ENCODE measurements at regions of chr7 and their contacts with region 1.

Region 1: GRCh38 chr7:101470668-101471487 is 108.2 kb downstream of the COL26A1 start:
- DNase-seq: no peak
- ATAC-seq: no peak
- H3K4me3 ChIP-seq: no peak overlapping the region
- H3K27ac ChIP-seq: no peak overlapping the region
- H3K4me1 ChIP-seq: no peaks in the 10 kb centered on the region
- H3K27me3 ChIP-seq: peaks cover 0 to 11% (median 0%) of the 10 kb centered on the region in 9 donors
- CTCF ChIP-seq: no peak
- POLR2A ChIP-seq: no peak

Region 2: DNA sequence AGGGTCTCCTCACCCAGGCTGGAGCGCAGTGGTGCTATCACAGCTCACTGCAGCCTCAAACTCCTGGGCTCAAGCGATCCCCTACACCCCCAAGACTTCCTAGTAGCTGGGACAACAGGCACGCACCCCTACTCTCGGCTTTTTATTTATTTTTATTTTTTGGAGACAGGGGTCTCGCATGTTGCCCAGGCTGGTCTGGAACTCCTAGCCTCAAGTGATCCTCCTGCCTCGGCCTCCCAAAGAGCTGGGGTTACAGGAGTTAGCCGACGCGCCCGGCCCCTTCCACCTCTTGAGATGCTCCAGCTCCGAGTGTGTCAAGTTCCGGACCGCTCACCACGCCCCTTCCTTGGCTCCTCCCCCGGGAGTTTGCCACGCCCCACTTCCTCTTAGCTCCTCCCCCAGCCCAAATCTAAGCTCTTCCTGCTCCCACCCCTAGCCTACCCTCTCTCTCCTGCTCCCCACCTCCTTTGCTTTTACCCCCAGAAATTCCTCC is 297.1 kb before region 1 on chr7:
- intact Hi-C with region 1: no loop called
- DNase-seq: no peak
- ATAC-seq: peak in 1 of 4 donors; percentile 25
- H3K4me3 ChIP-seq: peak overlapping the region in 4 of 12 donors; percentile 15 to 34 (median 26)
- H3K27ac ChIP-seq: no peak overlapping the region
- H3K4me1 ChIP-seq: peaks cover 0 to 43% (median 22%) of the 10 kb centered on the region in 12 donors
- H3K27me3 ChIP-seq: peaks cover 63 to 100% (median 99%) of the 10 kb centered on the region in 9 donors
- CTCF ChIP-seq: no peak
- POLR2A ChIP-seq: no peak

Region 3: GRCh38 chr7:101420436-101420835 is 50.4 kb before region 1 on chr7:
- intact Hi-C with region 1: loop called in 1 of 10 experiments (anchors 2 kb)
- DNase-seq: no peak
- ATAC-seq: peak in 1 of 4 donors; percentile 15
- H3K4me3 ChIP-seq: no peak overlapping the region
- H3K27ac ChIP-seq: no peak overlapping the region
- H3K4me1 ChIP-seq: no peaks in the 10 kb centered on the region
- H3K27me3 ChIP-seq: peaks cover 0 to 39% (median 0%) of the 10 kb centered on the region in 9 donors
- CTCF ChIP-seq: no peak
- POLR2A ChIP-seq: no peak